GM10248 (cell line): ENCODE measurements at regions of chr4 and their contacts with region 1.

Region 1: DNA sequence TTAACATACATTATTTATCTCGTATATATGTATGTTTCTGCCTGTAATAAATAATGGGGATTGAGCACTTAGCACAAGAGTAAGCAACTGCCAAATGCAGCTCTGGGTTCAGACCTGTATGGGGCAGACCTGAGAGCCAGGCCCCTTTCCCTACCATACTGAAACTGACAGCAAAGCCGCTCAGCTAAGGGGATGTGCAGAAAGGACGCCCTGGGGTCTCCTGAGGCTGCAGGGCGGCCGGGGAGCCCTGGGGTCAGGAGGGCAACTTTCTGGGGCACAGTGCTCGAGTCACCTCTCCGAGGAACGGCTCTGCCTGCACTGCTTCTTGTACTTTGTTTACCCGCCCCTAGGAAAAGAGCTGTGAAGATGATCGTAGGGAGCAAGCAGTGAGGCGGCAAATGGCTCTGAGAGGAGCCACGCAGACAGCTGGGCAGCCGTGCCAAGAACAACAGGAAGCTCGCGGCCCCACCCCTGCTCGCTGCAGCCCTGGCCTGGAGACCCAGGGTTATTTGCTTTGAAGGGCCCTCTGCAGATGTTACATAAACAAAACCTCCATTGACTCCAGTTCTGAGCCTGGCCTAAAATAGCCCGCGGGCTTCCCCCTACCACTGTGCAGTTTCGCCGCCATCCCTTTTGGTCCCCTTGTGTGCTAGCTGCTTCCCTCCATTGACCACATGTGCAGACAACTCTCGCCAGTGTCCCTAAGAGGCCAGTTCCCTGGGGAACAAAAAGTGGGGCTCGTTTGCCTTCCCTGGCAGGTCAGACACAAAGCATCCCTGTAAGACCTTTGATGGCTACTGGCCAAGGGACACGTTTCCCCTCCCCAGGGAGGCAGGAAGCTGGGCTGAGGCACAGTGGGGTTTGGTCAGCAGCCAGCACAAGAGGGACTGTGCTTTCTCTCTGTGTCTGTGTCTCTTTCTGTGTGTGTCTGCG is 111.3 kb upstream of the LNX1 start:
- DNase-seq: peak; percentile 47
- CTCF ChIP-seq: peak; percentile 15

Region 2: DNA sequence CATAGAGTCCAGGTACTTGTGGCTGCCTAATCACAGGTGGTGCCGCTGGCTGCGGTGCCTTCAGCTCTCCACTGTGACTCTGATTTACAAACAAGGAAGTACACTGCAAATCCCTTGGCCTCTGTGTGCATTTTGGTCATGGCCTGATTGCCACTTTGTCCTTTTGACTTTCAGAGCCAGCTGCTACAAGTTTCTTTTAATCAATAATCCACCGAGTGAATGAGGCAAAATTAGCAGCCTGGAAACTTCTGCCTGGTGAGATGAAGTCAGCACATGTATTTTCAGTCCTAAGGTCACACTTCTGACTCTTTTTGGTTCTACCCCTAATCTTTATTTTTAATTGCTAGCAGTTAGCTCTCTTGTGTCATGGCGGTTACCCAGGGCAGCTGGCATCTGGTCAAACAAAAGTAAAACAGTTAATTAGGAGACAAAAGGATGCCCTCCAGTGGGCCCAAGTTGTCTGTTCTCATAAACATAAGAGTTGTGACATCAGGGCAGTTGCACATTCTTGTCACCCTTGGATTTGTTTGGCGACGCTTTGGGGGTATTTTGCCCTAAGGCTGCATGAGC is 49.0 kb before region 1 on chr4:
- CTCF ChIA-PET with region 1: interaction called, 10 read pairs
- POLR2A ChIA-PET with region 1: no interaction called
- DNase-seq: no peak
- CTCF ChIP-seq: no peak

Region 3: DNA sequence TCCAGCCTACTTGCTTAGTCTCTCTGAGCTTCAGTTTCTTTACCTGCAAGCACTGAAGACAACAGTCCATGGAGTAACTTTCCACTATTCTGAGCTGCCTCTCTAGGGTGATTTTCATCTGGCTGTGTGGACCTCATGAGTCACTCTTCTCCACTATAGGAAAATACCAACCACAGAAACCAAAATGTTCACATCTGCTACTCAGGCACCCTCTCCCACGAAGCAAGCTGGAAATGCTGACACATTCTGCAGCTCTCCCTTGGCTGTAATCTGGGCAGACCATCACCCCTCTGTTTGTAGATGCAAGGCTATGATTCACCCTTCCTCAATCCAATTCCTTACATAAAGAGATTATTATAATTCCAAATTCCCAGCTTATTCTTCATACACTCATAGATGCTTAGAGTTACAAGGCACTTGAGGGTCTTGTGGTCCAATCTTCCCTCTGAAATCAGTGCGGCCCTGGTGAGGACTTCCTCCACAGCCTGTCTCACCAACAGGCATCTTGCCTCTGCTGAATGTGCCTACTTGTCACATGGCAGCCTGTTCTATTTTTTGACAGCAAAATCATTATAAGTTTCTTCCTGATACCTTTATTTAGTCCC is 14.3 kb before region 1 on chr4:
- CTCF ChIA-PET with region 1: interaction called, 32 read pairs
- POLR2A ChIA-PET with region 1: interaction called, 3 read pairs
- DNase-seq: peak; percentile 26
- CTCF ChIP-seq: no peak

Region 4: DNA sequence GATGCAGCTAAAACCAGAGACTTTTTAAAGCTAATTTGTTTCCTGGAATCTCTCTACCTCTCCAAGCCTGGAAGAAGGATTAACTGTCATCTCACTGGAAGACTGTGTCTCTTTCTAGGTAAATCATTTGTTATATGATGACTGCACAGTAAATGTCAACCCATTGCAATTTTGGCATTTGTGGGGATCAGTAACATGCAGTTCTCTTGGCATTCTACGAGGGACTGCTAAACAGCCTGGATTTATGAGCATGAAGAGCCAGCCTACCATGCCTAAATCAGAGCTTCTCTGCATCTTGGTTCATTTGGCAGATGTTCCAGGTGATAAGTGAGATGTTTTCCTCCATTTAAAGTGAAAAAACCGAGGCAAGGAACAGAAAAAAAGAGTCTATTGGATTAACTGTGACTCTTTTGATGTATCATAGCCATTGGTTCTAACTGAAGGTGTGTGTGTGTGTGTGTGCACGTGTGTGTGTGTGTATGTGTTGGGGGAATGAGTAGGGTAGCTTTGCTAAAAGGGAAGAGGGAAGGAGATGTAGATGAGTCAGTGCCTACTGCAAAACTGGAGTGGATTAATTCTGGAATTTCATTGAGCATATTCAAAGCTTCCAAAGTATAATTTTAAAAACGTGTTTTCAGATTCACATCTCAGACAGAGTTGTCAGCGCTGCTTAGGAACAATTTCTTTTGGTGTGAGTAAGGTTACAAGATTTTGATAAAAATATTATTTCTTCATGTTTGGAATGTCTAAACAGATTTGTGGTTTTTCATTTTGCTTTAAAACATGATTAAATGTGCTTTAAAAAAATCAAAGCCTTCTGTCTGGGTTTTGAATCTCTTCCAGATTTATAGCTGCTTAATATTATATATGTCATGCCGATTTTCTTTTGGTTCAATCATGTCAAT is 11.9 kb after region 1 on chr4:
- CTCF ChIA-PET with region 1: interaction called, 30 read pairs
- POLR2A ChIA-PET with region 1: no interaction called
- DNase-seq: no peak
- CTCF ChIP-seq: no peak

Region 5: GRCh38 chr4:53748328-53748772 is 45.8 kb after region 1 on chr4:
- CTCF ChIA-PET with region 1: interaction called, 31 read pairs
- POLR2A ChIA-PET with region 1: no interaction called
- DNase-seq: peak; percentile 69
- CTCF ChIP-seq: no peak

Region 6: GRCh38 chr4:53804719-53805118 is 102.1 kb after region 1 on chr4:
- CTCF ChIA-PET with region 1: interaction called, 55 read pairs
- POLR2A ChIA-PET with region 1: no interaction called
- DNase-seq: peak; percentile 40
- CTCF ChIP-seq: peak; percentile 67

Region 7: DNA sequence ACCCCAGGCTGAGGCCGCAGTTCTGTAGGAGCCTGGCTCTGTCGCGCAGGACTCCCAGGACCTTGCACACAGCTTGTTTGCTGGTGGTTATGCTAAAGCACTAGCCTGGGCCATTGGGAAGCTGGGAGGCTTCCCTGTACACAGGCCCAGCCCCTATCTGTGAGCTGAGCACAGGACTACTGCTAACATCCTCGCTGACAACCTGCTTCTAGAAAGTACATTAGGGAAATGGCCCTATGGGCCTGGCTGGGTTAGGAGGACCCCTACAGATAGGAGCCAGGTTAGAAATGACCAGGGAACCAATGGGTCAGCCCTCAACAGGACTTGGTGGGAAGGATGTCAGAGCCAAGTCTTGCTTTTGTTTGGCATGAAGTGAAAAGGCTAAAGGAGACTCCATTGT is 108.0 kb after region 1 on chr4:
- CTCF ChIA-PET with region 1: interaction called, 55 read pairs
- POLR2A ChIA-PET with region 1: no interaction called
- DNase-seq: no peak
- CTCF ChIP-seq: no peak